Naive thymus-derived CD4-positive, alpha-beta T cell (primary cell): ENCODE measurements at regions of chr19 and their contacts with region 1.

Region 1: GRCh38 chr19:41397086-41398049 is at the starts of genes BCKDHA and EXOSC5:
- DNase-seq: peak; percentile 96 to 100 (median 99)
- ATAC-seq: peak; percentile 99
- H3K4me3 ChIP-seq: peak within 1 kb of the TSS; percentile 96
- H3K4me3 Mint-ChIP-seq: peak within 1 kb of the TSS; percentile 95 to 99 (median 98)
- H3K27ac ChIP-seq: peak within 1 kb of the TSS; percentile 89
- H3K27ac Mint-ChIP-seq: peak within 1 kb of the TSS; percentile 99 to 100 (median 100)
- H3K4me1 ChIP-seq: peaks cover 19 to 23% of the 10 kb centered on the region in 2 donors
- H3K4me1 Mint-ChIP-seq: peaks cover 33 to 61% (median 50%) of the 10 kb centered on the region in 7 donors
- H3K27me3 ChIP-seq: no peaks in the 10 kb centered on the region
- H3K27me3 Mint-ChIP-seq: no peaks in the 10 kb centered on the region
- total RNA-seq, gene BCKDHA: 19.4 to 25.0 (median 20.5) TPM
- total RNA-seq, gene EXOSC5: 15.0 to 37.5 (median 20.6) TPM

Region 2: GRCh38 chr19:40576585-40577451 is 820.5 kb before region 1 on chr19 and contains the start of gene SHKBP1:
- CTCF ChIA-PET with region 1: no interaction called
- POLR2A ChIA-PET with region 1: no interaction called
- intact Hi-C with region 1: loop called in 1 of 2 experiments (anchors 1 kb)
- DNase-seq: peak; percentile 84 to 93 (median 92)
- ATAC-seq: peak; percentile 97
- H3K4me3 ChIP-seq: peak within 1 kb of the TSS; percentile 84
- H3K4me3 Mint-ChIP-seq: peak within 1 kb of the TSS; percentile 80 to 96 (median 90)
- H3K27ac ChIP-seq: peak within 1 kb of the TSS; percentile 77
- H3K27ac Mint-ChIP-seq: peak within 1 kb of the TSS; percentile 79 to 96 (median 87)
- H3K4me1 ChIP-seq: peaks cover 14 to 22% of the 10 kb centered on the region in 2 donors
- H3K4me1 Mint-ChIP-seq: peaks cover 16 to 26% (median 20%) of the 10 kb centered on the region in 7 donors
- H3K27me3 ChIP-seq: no peaks in the 10 kb centered on the region
- H3K27me3 Mint-ChIP-seq: no peaks in the 10 kb centered on the region
- total RNA-seq, gene SHKBP1: 98.4 to 218 (median 139) TPM

Region 3: GRCh38 chr19:41206926-41207750 is 190.2 kb before region 1 on chr19:
- CTCF ChIA-PET with region 1: no interaction called
- POLR2A ChIA-PET with region 1: no interaction called
- intact Hi-C with region 1: loop called in 1 of 2 experiments (anchors 1 kb)
- DNase-seq: no peak
- ATAC-seq: no peak
- H3K4me3 ChIP-seq: no peak overlapping the region
- H3K4me3 Mint-ChIP-seq: no peak overlapping the region
- H3K27ac ChIP-seq: no peak overlapping the region
- H3K27ac Mint-ChIP-seq: peak overlapping the region in 6 of 9 donors; percentile 15 to 85 (median 54)
- H3K4me1 ChIP-seq: no peaks in the 10 kb centered on the region
- H3K4me1 Mint-ChIP-seq: peaks cover 3 to 12% (median 7%) of the 10 kb centered on the region in 7 donors
- H3K27me3 ChIP-seq: no peaks in the 10 kb centered on the region
- H3K27me3 Mint-ChIP-seq: no peaks in the 10 kb centered on the region

Region 4: DNA sequence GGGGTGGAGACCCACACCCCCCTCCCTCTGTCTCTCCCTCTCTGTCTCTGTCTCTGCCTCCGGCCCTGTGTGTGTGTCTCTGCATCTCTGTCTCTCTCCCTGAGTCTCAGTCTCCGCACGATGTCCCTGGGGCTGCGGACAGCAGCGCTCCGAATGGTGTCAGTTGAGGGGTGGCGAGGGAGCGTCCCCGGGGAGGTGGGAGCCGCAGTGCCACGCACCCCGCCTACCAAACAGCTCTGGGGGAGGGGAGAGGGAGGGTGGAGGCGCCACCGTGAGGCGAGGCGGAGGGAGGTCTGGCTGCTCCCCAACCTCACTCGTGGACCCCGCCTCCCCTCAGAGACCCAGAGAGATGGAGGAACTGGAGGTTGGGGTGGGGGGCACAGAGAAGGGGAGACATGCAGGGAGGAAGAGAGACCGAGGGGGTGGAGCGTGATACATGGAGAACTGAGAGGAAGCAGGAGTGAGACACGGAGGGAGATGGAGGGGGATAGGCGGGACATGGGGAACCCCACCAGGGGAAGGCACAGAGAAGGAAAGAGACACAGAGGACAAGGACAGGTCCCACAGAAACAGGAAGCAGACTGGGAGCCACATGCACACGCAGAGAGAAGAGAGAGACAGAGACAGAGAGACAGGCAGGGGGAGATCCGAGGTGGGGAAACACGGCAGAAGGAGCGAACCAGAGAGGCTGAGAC is 523.7 kb after region 1 on chr19:
- CTCF ChIA-PET with region 1: no interaction called
- POLR2A ChIA-PET with region 1: no interaction called
- intact Hi-C with region 1: no loop called
- DNase-seq: no peak
- ATAC-seq: no peak
- H3K4me3 ChIP-seq: no peak overlapping the region
- H3K4me3 Mint-ChIP-seq: peak overlapping the region in 5 of 10 donors; percentile 15 to 46 (median 19)
- H3K27ac ChIP-seq: no peak overlapping the region
- H3K27ac Mint-ChIP-seq: peak overlapping the region in 2 of 9 donors; percentile 21 to 39
- H3K4me1 ChIP-seq: peaks cover 5 to 22% of the 10 kb centered on the region in 2 donors
- H3K4me1 Mint-ChIP-seq: peaks cover 14 to 22% (median 17%) of the 10 kb centered on the region in 7 donors
- H3K27me3 ChIP-seq: peaks cover 0 to 8% of the 10 kb centered on the region in 2 donors
- H3K27me3 Mint-ChIP-seq: peaks cover 0 to 17% (median 9%) of the 10 kb centered on the region in 5 donors